ENCODE measurements at regions of chr1 and their contacts with region 1.

Region 1: DNA sequence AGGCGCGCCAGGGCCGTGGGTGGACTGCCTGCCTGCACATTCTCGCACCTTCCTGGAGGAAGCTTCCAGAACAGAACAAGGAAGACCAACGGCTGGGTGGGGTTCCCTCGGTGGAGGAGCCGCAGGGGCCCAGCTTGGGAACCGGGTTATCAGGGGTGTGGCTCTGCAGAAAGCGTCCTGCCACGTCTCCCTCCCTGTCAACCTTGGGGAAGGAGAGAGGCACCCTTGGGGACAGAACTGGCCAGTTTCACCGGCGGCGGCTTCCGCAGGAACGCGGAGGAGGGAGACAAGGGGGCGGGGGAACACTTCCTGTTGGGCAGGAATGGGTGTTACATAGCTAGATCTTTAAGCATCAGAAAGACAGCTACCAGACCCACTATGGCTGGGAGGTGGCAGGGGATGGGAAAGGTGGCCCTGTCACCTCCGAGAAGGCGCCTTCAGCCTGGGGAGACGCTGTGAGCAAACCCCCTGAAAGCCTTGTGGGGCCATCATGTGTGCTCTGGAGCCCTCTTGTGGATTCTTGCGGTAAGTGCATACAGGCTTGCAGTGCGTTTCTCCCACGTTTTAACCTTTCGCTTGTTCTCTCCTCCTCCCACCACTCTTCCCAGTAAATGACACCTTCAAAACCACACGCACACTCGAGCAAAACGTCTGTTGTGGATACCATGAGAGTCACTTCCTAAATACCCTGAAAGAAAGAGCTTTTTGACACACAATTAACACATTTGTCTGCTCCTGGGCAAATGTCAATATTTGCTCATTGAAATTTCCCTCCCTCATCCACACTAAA is 3.8 kb upstream of the PLEKHA6 start:
- DNase-seq: peak; percentile 86
- H3K4me3 ChIP-seq: peak overlapping the region; percentile 15 to 52 (median 48)
- H3K27ac ChIP-seq: peak overlapping the region in 2 of 4 donors; percentile 45 to 57
- H3K4me1 ChIP-seq: peaks cover 0 to 18% (median 16%) of the 10 kb centered on the region in 4 donors
- H3K27me3 ChIP-seq: peaks cover 4 to 28% (median 9%) of the 10 kb centered on the region in 3 donors
- CTCF ChIP-seq: peak; percentile 93 to 99 (median 96)
- EP300 ChIP-seq: no peak
- POLR2A ChIP-seq: no peak

Region 2: DNA sequence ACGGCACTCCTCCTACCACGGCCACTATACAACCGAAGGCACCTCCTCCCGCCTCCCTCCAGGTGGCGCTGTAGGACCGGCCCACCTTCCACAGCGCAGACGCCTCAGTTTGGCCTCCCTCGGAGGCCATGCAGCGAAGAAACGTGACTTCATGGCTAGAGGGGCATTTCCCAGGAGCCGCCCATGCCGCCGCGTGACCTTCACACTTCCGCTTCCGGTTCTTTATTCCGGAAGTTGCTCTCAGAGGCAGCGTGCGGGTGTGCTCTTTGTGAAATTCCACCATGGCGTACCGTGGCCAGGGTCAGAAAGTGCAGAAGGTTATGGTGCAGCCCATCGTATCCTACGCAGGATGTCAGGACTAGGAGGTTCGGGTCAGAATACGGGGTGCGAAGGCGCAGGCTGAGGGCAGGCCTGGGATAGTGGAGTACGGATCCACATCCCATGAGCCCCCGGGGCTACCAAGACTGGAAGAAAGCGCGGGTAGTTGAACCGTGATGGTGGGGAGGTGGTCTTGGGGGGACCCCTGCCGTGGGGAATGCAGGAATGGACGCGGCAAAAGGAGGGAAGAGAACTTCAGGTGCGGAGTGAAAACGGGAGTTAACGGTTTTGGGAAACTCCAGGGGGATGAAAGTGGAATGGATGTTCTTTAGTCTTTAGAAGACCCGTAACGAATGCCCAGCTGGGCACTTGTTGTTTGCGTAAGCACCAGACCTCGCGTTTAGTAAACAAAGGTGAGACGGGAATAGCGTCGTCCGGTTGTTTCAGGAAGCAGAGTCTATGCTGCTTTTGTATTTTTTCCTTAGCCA is 501.9 kb before region 1 on chr1 and contains the start of gene SNRPE:
- intact Hi-C with region 1: loop called (anchors 5 kb)
- DNase-seq: peak; percentile 98
- H3K4me3 ChIP-seq: peak within 1 kb of the TSS; percentile 61 to 92 (median 77)
- H3K27ac ChIP-seq: peak within 1 kb of the TSS; percentile 58 to 79 (median 71)
- H3K4me1 ChIP-seq: peaks cover 0 to 29% (median 25%) of the 10 kb centered on the region in 4 donors
- H3K27me3 ChIP-seq: no peaks in the 10 kb centered on the region
- CTCF ChIP-seq: peak; percentile 75 to 94 (median 88)
- EP300 ChIP-seq: peak in 1 of 4 donors; percentile 49
- POLR2A ChIP-seq: peak in 1 of 2 donors; percentile 30
- total RNA-seq, gene SNRPE: 23.1 to 66.0 (median 43.4) TPM

Region 3: GRCh38 chr1:204162231-204163074 is 201.1 kb before region 1 on chr1:
- intact Hi-C with region 1: loop called (anchors 1 kb)
- DNase-seq: peak; percentile 86
- H3K4me3 ChIP-seq: no peak overlapping the region
- H3K27ac ChIP-seq: no peak overlapping the region
- H3K4me1 ChIP-seq: no peaks in the 10 kb centered on the region
- H3K27me3 ChIP-seq: peaks cover 0 to 10% (median 0%) of the 10 kb centered on the region in 3 donors
- CTCF ChIP-seq: peak; percentile 90 to 98 (median 94)
- EP300 ChIP-seq: no peak
- POLR2A ChIP-seq: no peak

Region 4: GRCh38 chr1:204207136-204207616 is 156.4 kb before region 1 on chr1:
- intact Hi-C with region 1: loop called (anchors 5 kb)
- DNase-seq: peak; percentile 77
- H3K4me3 ChIP-seq: no peak overlapping the region
- H3K27ac ChIP-seq: no peak overlapping the region
- H3K4me1 ChIP-seq: peaks cover 0 to 6% (median 2%) of the 10 kb centered on the region in 4 donors
- H3K27me3 ChIP-seq: peaks cover 0 to 42% (median 0%) of the 10 kb centered on the region in 3 donors
- CTCF ChIP-seq: peak; percentile 53 to 88 (median 71)
- EP300 ChIP-seq: no peak
- POLR2A ChIP-seq: no peak

Region 5: GRCh38 chr1:204257954-204258752 is 105.4 kb before region 1 on chr1:
- intact Hi-C with region 1: loop called (anchors 1 kb)
- DNase-seq: no peak
- H3K4me3 ChIP-seq: no peak overlapping the region
- H3K27ac ChIP-seq: no peak overlapping the region
- H3K4me1 ChIP-seq: peaks cover 0 to 4% (median 2%) of the 10 kb centered on the region in 4 donors
- H3K27me3 ChIP-seq: no peaks in the 10 kb centered on the region
- CTCF ChIP-seq: peak in 3 of 4 experiments; percentile 30 to 48 (median 32)
- EP300 ChIP-seq: no peak
- POLR2A ChIP-seq: no peak

Region 6: DNA sequence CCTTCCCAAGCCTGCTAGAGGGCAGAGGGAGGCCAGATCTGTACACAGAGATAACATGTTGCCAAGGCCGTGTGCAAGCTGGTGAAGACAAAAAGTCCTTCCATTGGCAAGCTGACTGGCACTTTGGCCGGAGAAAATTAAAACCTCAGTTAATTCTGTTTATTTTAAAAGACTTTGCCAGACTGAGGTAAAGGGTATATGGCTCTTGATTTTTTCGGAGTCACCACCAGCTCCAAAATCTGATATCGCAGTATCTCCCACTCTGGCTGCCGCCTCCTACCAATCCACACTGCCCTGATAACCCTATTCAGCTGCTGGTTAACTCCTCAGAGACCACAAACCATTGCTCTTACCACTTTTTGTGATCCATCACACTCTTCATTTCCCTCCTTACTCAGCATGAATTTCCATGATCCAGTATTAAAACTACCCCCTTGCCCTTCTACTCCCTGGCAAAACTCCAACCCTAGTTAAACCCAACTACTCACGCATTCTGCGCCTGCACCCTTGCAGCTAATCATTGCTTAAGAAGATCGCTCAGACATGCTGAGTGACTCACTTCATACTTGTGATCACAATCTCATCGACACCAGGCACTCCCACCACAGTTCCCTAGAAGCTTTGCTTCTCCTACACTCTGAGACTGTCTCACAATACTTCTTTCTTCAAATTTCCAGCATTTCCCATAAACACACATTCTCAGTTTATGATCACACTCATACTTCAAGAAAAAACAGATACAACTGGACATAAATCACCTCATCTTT is 53.9 kb after region 1 on chr1:
- intact Hi-C with region 1: no loop called
- DNase-seq: peak; percentile 86
- H3K4me3 ChIP-seq: peak overlapping the region in 1 of 4 donors; percentile 1
- H3K27ac ChIP-seq: peak overlapping the region; percentile 79 to 83 (median 82)
- H3K4me1 ChIP-seq: peaks cover 0 to 47% (median 42%) of the 10 kb centered on the region in 4 donors
- H3K27me3 ChIP-seq: no peaks in the 10 kb centered on the region
- CTCF ChIP-seq: no peak
- EP300 ChIP-seq: peak in 1 of 4 donors; percentile 16
- POLR2A ChIP-seq: no peak

Region 7: GRCh38 chr1:204697893-204698292 is 334.4 kb after region 1 on chr1:
- intact Hi-C with region 1: no loop called
- DNase-seq: peak; percentile 83
- H3K4me3 ChIP-seq: no peak overlapping the region
- H3K27ac ChIP-seq: peak overlapping the region in 2 of 4 donors; percentile 17 to 25
- H3K4me1 ChIP-seq: peaks cover 0 to 13% (median 7%) of the 10 kb centered on the region in 4 donors
- H3K27me3 ChIP-seq: no peaks in the 10 kb centered on the region
- CTCF ChIP-seq: no peak
- EP300 ChIP-seq: no peak
- POLR2A ChIP-seq: no peak

Region 8: GRCh38 chr1:204915861-204916495 is 552.4 kb after region 1 on chr1:
- intact Hi-C with region 1: no loop called
- DNase-seq: peak; percentile 58
- H3K4me3 ChIP-seq: no peak overlapping the region
- H3K27ac ChIP-seq: no peak overlapping the region
- H3K4me1 ChIP-seq: peaks cover 0 to 14% (median 0%) of the 10 kb centered on the region in 4 donors
- H3K27me3 ChIP-seq: no peaks in the 10 kb centered on the region
- CTCF ChIP-seq: no peak
- EP300 ChIP-seq: no peak
- POLR2A ChIP-seq: no peak